Ovary (tissue), 10 donors: ENCODE measurements at regions of chr12 and their contacts with region 1.

Region 1: DNA sequence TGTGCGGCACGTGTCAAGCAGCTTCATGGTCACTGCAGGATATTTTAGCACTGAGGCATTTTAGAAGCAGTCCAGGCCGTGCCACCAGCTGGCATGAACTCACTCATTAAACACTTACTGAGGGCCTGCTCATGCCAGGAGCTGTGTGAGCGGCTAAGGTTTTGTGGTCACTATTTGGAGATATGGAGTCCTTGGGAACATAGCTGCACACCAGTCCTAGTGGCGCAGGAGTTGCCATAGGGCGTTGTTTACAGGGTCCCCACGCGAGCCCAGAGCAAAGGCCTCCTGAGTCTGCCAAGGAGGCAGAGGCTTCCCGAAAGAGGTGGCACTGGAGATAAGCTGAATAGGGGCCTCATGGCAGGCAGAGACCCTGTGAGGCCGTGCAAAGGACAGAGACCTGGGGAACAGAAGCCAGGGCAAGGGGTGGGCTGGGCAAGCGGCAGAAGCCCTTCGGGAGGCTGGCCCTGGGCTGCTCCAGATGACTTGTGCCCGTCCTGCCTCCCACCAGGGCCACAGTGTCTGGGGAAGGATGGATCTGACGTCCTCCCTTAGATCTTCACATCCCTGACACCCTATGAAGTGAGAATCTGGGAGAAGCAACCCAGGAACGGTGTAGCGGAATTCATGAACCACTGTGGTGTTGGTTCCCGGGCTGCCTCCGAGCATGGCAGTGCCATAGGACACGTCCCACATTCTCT is 38.9 kb downstream of the SFSWAP start:
- DNase-seq: peak in 1 of 5 donors; percentile 8
- H3K4me3 ChIP-seq: no peak overlapping the region
- H3K27ac ChIP-seq: no peak overlapping the region
- H3K4me1 ChIP-seq: no peaks in the 10 kb centered on the region
- H3K27me3 ChIP-seq: no peaks in the 10 kb centered on the region
- CTCF ChIP-seq: no peak
- EP300 ChIP-seq: no peak
- POLR2A ChIP-seq: no peak

Region 2: DNA sequence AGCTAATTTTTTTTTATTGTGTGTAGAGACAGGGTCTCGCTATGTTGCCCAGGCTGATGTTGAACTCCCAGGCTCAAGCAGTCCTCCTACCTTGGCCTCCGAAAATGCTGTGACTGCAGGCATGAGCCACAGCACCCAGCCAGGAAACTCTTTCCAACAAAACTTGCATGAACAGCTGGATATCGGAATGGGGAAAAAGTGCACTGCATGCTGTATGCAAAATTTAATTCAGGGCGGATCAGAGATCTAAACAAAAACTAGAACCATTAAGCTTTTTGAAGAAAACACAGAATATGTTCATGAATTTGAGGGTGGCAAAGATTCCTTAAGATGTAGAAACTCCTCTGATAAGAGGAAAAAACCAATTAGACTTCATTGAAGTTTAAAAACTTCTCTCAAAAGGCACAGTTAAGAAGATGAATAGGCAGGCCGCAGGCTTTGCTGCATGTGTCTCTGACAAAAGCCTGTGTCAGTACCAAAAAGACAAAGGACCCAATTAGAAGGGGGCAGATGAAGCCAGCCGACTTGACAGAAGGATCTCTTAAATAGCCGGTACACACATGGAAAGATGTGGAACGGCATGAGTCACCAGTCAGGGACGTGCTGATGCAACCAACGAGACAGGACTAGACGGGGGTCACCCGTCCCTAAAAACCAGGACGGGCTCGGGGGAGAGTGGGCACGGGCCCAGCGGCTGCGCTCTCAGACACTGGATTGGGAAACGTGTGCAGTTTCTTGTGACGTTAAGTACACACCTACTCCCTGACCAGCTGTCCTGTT is 43.7 kb after region 1 on chr12:
- intact Hi-C with region 1: loop called in 1 of 4 experiments (anchors 2 kb)
- DNase-seq: no peak
- H3K4me3 ChIP-seq: no peak overlapping the region
- H3K27ac ChIP-seq: no peak overlapping the region
- H3K4me1 ChIP-seq: no peaks in the 10 kb centered on the region
- H3K27me3 ChIP-seq: no peaks in the 10 kb centered on the region
- CTCF ChIP-seq: no peak
- EP300 ChIP-seq: no peak
- POLR2A ChIP-seq: no peak